Heart right ventricle (tissue), 16 donors: ENCODE measurements at regions of chr19 and their contacts with region 1.

Region 1: DNA sequence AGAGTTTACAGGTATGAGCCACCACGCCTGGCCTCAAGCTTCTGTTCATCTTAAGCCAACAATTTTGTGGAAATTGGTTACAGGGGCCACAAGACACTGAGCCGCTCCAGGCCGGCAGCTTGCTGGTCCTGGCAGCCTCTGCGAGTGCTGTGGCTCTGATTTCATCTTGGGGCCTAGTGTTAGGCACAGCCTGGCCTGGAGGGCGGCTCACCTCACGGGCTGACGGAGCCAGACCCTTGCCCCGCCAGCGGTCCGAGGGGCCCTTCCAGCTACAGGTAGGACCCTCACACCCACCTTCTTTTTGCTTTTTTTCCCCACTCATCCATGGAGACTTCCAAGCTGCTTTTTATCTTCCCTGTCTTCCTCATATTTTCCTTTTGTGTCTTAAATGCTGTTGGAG is 8.6 kb downstream of the ZNF544 start:
- DNase-seq: no peak
- ATAC-seq: no peak
- H3K4me3 ChIP-seq: no peak overlapping the region
- H3K27ac ChIP-seq: no peak overlapping the region
- H3K4me1 ChIP-seq: no peaks in the 10 kb centered on the region
- H3K27me3 ChIP-seq: no peaks in the 10 kb centered on the region
- CTCF ChIP-seq: no peak

Region 2: DNA sequence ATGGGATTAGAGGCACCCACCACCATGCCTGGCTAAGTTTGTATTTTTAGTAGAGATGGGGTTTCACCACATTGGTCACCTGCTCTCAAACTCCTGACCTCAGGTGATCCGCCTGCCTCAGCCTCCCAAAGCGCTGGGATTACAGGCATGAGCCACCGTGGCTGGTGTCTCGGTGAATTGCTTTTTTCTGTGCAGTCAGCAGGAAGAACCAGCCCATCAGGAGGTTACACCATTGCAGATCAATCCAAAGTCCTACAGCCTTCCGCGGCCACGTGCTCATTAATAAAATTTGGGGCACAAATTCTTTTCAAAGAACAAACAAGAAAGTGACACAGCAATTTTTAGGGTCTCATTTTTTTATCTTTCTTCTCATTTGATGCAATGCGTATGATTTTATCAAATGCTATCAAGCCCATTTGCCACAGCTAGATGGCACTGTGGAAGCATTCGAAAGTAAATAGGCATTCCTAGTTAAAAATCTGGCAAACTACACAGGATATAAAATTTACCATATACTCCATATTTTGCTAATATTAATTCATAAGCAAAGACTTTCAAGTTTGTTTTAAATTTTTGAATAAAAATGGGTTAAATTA is 1511.4 kb before region 1 on chr19:
- intact Hi-C with region 1: loop called in 1 of 10 experiments (anchors 10 kb)
- DNase-seq: no peak
- ATAC-seq: no peak
- H3K4me3 ChIP-seq: no peak overlapping the region
- H3K27ac ChIP-seq: no peak overlapping the region
- H3K4me1 ChIP-seq: no peaks in the 10 kb centered on the region
- H3K27me3 ChIP-seq: peaks cover 0 to 16% (median 0%) of the 10 kb centered on the region in 7 donors
- CTCF ChIP-seq: peak in 6 of 9 donors; percentile 24 to 57 (median 37)

Region 3: DNA sequence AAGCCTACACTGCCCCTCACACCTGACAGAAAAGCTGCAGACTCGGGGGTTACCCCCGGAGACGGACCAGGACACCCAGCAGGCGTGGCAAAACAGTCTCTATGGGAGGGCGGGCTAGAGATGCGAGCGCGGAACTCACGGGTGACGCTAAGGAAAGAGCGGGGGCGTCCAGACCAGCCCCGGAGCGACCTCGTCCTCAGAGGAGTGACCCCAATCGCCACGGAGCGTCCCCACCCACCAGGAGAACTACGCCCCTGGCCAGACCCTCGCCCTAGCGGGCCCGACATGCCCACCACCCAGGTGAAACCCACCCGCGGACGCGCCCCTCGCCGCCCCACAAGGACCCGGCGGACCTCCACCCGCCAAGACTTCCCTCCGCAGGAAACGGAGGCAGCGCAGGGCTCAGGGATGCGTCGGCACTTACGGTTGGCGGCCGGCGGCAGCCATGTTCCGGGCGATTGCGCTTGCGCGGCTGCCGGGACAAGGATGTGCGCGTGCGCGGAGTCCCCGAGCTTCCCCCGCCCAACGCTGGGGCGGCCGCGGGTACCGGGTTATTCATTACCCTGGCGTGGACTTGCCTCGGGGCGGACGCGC is 86.9 kb before region 1 on chr19 and contains the start of gene ZNF329:
- intact Hi-C with region 1: no loop called
- DNase-seq: peak; percentile 89 to 94
- ATAC-seq: peak; percentile 75 to 90 (median 82)
- H3K4me3 ChIP-seq: peak within 1 kb of the TSS; percentile 76 to 98 (median 79)
- H3K27ac ChIP-seq: peak within 1 kb of the TSS; percentile 44 to 93 (median 87)
- H3K4me1 ChIP-seq: peaks cover 2 to 51% (median 32%) of the 10 kb centered on the region in 9 donors
- H3K27me3 ChIP-seq: no peaks in the 10 kb centered on the region
- CTCF ChIP-seq: peak in 1 of 9 donors; percentile 6
- total RNA-seq, gene ZNF329: 6.5 to 9.7 (median 7.9) TPM

Region 4: DNA sequence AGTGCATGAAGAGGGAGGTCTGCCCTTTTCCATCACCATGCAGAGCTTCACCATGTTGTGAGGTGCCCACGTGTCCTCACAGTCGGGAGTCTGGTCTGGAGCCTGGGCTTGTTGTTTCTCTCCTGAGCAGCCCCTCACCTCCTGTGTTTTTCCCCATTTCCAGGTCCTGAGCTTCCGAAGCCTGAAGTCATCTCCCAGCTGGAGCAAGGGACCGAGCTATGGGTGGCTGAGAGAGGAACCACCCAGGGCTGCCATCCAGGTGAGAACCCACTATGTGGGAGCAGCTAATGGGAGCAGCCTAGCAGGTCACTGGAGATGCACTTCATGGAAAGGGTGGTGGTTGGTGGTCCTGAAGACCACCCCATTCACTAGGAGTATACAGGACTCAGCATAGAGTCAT is 48.6 kb after region 1 on chr19:
- intact Hi-C with region 1: no loop called
- DNase-seq: no peak
- ATAC-seq: no peak
- H3K4me3 ChIP-seq: no peak overlapping the region
- H3K27ac ChIP-seq: no peak overlapping the region
- H3K4me1 ChIP-seq: peaks cover 0 to 3% (median 0%) of the 10 kb centered on the region in 9 donors
- H3K27me3 ChIP-seq: no peaks in the 10 kb centered on the region
- CTCF ChIP-seq: no peak